Left lung (tissue), 14 donors: ENCODE measurements at regions of chr11 and their contacts with region 1.

Region 1: DNA sequence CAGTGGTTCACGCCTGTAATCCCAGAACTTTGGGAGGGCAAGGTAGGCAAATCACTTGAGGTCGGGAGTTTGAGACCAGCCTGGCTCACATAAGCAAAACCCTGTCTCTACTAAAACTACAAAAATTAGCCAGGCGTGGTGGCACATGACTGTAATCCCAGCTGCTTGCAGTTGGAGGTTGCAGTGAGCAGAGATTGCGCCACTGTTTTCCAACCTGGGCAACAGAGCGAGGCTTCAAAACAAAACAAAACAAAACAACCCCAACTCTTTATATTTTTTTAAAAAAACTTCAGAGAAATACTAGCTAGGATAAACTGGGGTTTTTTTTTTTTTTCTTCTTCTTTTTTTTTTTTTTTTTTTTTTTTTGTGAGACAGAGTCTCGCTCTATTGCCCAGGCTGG is 31.8 kb upstream of the RAPSN start:
- DNase-seq: no peak
- ATAC-seq: no peak
- H3K4me3 ChIP-seq: no peak overlapping the region
- H3K27ac ChIP-seq: no peak overlapping the region
- H3K4me1 ChIP-seq: peaks cover 0 to 20% of the 10 kb centered on the region in 2 donors
- H3K27me3 ChIP-seq: no peaks in the 10 kb centered on the region
- CTCF ChIP-seq: no peak

Region 2: GRCh38 chr11:47552566-47553416 is 72.0 kb after region 1 on chr11 and contains the start of gene CELF1:
- intact Hi-C with region 1: loop called in 1 of 2 experiments (anchors 10 kb)
- DNase-seq: peak; percentile 87 to 99 (median 94)
- ATAC-seq: peak; percentile 98
- H3K4me3 ChIP-seq: peak within 1 kb of the TSS; percentile 96 to 98
- H3K27ac ChIP-seq: peak within 1 kb of the TSS; percentile 94
- H3K4me1 ChIP-seq: peaks cover 9 to 50% of the 10 kb centered on the region in 2 donors
- H3K27me3 ChIP-seq: no peaks in the 10 kb centered on the region
- CTCF ChIP-seq: peak; percentile 95 to 98
- polyA plus RNA-seq, gene CELF1: 80.2 to 98.9 (median 90.7) TPM

Region 3: DNA sequence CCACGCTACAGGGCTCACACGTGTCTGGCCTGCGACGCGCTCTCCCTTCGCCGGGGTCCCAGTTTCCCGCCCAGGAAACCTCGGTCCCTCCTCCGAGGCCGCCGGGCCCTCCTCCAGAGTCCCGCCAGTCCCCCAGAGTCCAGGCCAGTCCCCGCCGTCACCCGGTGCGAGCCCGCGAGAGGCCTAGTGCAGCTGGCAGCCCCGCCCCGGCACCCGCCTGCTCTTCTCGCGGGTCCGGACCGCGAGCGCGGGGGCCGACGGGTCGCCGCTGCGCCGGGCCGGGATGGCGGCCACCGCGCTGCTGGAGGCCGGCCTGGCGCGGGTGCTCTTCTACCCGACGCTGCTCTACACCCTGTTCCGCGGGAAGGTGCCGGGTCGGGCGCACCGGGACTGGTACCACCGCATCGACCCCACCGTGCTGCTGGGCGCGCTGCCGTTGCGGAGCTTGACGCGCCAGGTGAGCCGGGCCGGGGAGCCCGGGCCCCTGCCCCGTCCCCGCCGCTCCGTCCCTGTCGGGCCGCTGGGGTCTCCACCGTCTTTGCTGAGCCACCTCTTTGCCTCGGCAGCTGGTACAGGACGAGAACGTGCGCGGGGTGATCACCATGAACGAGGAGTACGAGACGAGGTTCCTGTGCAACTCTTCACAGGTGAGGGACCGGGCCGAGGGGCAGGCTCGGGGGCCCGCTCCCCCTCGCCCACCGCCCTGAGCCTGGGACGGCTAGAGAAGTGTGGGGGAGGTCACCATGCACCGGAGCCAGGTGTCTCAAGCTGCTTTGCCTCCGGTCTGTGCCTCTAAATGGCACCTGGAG is 84.8 kb after region 1 on chr11 and contains the start of gene PTPMT1:
- intact Hi-C with region 1: loop called in 1 of 2 experiments (anchors 10 kb)
- DNase-seq: peak; percentile 56 to 94 (median 78)
- ATAC-seq: peak; percentile 96
- H3K4me3 ChIP-seq: peak within 1 kb of the TSS; percentile 90 to 96
- H3K27ac ChIP-seq: peak within 1 kb of the TSS; percentile 72 to 82
- H3K4me1 ChIP-seq: peaks cover 5 to 28% of the 10 kb centered on the region in 2 donors
- H3K27me3 ChIP-seq: no peaks in the 10 kb centered on the region
- CTCF ChIP-seq: no peak
- polyA plus RNA-seq, gene PTPMT1: 35.0 to 42.9 (median 39.3) TPM